Psoas muscle (tissue), 8 donors: ENCODE measurements at regions of chr11 and their contacts with region 1.

Region 1: GRCh38 chr11:95067039-95067840 is 521 bp downstream of the SRSF8 start:
- DNase-seq: peak; percentile 90 to 94
- ATAC-seq: peak; percentile 81 to 87 (median 84)
- H3K4me3 ChIP-seq: peak overlapping the region; percentile 84
- H3K27ac ChIP-seq: peak overlapping the region; percentile 93
- H3K4me1 ChIP-seq: peaks cover 12% of the 10 kb centered on the region
- H3K27me3 ChIP-seq: no peaks in the 10 kb centered on the region
- CTCF ChIP-seq: peak; percentile 66

Region 2: GRCh38 chr11:94851864-94852636 is 215.2 kb before region 1 on chr11:
- intact Hi-C with region 1: no loop called
- DNase-seq: no peak
- ATAC-seq: peak; percentile 71 to 86 (median 80)
- H3K4me3 ChIP-seq: no peak overlapping the region
- H3K27ac ChIP-seq: peak overlapping the region; percentile 78
- H3K4me1 ChIP-seq: peaks cover 39% of the 10 kb centered on the region
- H3K27me3 ChIP-seq: no peaks in the 10 kb centered on the region
- CTCF ChIP-seq: no peak

Region 3: GRCh38 chr11:95028357-95028756 is 38.9 kb before region 1 on chr11:
- intact Hi-C with region 1: no loop called
- DNase-seq: no peak
- ATAC-seq: no peak
- H3K4me3 ChIP-seq: no peak overlapping the region
- H3K27ac ChIP-seq: no peak overlapping the region
- H3K4me1 ChIP-seq: no peaks in the 10 kb centered on the region
- H3K27me3 ChIP-seq: no peaks in the 10 kb centered on the region
- CTCF ChIP-seq: no peak

Region 4: DNA sequence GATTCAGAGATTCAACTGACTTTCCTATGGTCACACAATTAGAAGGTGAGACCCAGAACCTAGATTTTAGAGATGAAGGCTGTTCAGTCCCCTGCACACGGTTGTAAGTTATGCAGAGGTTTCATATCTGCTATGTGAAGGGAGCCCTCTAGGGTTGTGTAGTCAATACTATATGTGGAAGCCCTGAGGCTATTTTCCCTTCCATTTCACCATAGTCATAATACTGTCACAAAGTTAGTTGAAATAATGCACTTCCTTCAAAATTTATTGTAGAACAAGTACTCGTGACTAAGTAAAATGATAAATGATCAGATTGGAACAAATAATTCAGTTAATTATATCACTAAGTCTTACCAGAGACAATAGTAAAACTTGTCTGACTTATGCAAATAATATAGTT is 71.2 kb after region 1 on chr11:
- intact Hi-C with region 1: loop called (anchors 1 to 5 kb)
- DNase-seq: no peak
- ATAC-seq: peak; percentile 77 to 94 (median 84)
- H3K4me3 ChIP-seq: no peak overlapping the region
- H3K27ac ChIP-seq: no peak overlapping the region
- H3K4me1 ChIP-seq: peaks cover 7% of the 10 kb centered on the region
- H3K27me3 ChIP-seq: no peaks in the 10 kb centered on the region
- CTCF ChIP-seq: peak; percentile 40

Region 5: DNA sequence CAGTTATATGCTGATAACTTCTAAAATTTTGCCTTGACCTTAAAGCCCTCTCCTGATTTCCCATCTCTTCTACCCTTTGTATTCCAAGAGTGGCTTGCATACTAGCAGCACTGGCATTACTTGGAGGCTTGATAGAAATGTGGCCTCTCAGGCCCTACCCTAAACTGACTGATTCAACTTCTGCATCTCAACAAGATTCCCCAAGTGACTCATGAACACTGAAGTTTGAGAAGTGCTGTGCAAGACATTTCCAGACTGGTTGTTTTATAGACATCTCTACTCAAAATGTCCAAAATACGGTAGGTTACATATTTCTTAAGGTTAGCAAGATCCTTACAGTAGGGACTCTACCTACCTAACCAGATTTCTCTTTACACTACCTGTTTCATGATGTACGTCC is 115.2 kb after region 1 on chr11:
- intact Hi-C with region 1: no loop called
- DNase-seq: no peak
- ATAC-seq: no peak
- H3K4me3 ChIP-seq: no peak overlapping the region
- H3K27ac ChIP-seq: no peak overlapping the region
- H3K4me1 ChIP-seq: no peaks in the 10 kb centered on the region
- H3K27me3 ChIP-seq: no peaks in the 10 kb centered on the region
- CTCF ChIP-seq: no peak

Region 6: GRCh38 chr11:95231127-95231880 is 164.1 kb after region 1 on chr11 and contains the start of gene SESN3:
- intact Hi-C with region 1: loop called in 1 of 2 experiments (anchors 5 kb)
- DNase-seq: peak; percentile 99
- ATAC-seq: peak; percentile 97 to 98 (median 98)
- H3K4me3 ChIP-seq: peak within 1 kb of the TSS; percentile 83
- H3K27ac ChIP-seq: peak within 1 kb of the TSS; percentile 62
- H3K4me1 ChIP-seq: peaks cover 8% of the 10 kb centered on the region
- H3K27me3 ChIP-seq: no peaks in the 10 kb centered on the region
- CTCF ChIP-seq: no peak
- total RNA-seq, gene SESN3: 5.3 to 94.6 (median 15.6) TPM

Region 7: GRCh38 chr11:95337175-95337957 is 270.1 kb after region 1 on chr11:
- intact Hi-C with region 1: loop called in 1 of 2 experiments (anchors 5 kb)
- DNase-seq: peak; percentile 69 to 79
- ATAC-seq: peak; percentile 57 to 84 (median 77)
- H3K4me3 ChIP-seq: peak overlapping the region; percentile 17
- H3K27ac ChIP-seq: peak overlapping the region; percentile 76
- H3K4me1 ChIP-seq: peaks cover 27% of the 10 kb centered on the region
- H3K27me3 ChIP-seq: no peaks in the 10 kb centered on the region
- CTCF ChIP-seq: no peak

Region 8: GRCh38 chr11:95705485-95706124 is 638.4 kb after region 1 on chr11:
- intact Hi-C with region 1: loop called in 1 of 2 experiments (anchors 10 kb)
- DNase-seq: peak; percentile 77 to 88
- ATAC-seq: peak; percentile 93 to 99 (median 98)
- H3K4me3 ChIP-seq: no peak overlapping the region
- H3K27ac ChIP-seq: no peak overlapping the region
- H3K4me1 ChIP-seq: peaks cover 2% of the 10 kb centered on the region
- H3K27me3 ChIP-seq: no peaks in the 10 kb centered on the region
- CTCF ChIP-seq: peak; percentile 95

Region 9: GRCh38 chr11:95764267-95764898 is 697.1 kb after region 1 on chr11:
- intact Hi-C with region 1: loop called in 1 of 2 experiments (anchors 10 kb)
- DNase-seq: no peak
- ATAC-seq: peak in 3 of 4 donors; percentile 42 to 72 (median 51)
- H3K4me3 ChIP-seq: no peak overlapping the region
- H3K27ac ChIP-seq: no peak overlapping the region
- H3K4me1 ChIP-seq: no peaks in the 10 kb centered on the region
- H3K27me3 ChIP-seq: peaks cover 0 to 2% (median 0%) of the 10 kb centered on the region in 3 donors
- CTCF ChIP-seq: peak; percentile 69